ENCODE measurements at regions of chr3 and their contacts with region 1.

Region 1: DNA sequence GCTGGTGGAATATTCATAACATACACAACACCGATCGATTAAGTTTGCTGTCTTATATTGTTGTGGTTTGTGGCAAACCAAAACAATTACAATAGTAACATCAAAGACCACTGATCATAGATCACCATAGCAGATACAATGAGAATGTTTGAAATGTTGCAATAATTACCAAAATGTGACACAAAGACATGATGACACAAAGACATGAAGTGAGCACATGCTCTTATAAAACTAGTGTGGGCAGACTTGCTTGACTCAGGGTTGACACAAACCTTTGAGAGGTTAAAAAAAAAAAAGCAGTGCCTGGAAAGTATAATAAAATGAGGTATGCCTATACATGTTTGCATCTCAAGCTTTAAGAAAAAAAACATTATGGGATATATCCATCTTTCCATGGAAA is 130.3 kb downstream of the NR1I2 start:
- DNase-seq: no peak
- ATAC-seq: peak; percentile 79
- H3K4me3 Mint-ChIP-seq: peak overlapping the region; percentile 44
- H3K27ac Mint-ChIP-seq: peak overlapping the region; percentile 90
- H3K4me1 Mint-ChIP-seq: peaks cover 27% of the 10 kb centered on the region
- H3K27me3 Mint-ChIP-seq: no peaks in the 10 kb centered on the region

Region 2: DNA sequence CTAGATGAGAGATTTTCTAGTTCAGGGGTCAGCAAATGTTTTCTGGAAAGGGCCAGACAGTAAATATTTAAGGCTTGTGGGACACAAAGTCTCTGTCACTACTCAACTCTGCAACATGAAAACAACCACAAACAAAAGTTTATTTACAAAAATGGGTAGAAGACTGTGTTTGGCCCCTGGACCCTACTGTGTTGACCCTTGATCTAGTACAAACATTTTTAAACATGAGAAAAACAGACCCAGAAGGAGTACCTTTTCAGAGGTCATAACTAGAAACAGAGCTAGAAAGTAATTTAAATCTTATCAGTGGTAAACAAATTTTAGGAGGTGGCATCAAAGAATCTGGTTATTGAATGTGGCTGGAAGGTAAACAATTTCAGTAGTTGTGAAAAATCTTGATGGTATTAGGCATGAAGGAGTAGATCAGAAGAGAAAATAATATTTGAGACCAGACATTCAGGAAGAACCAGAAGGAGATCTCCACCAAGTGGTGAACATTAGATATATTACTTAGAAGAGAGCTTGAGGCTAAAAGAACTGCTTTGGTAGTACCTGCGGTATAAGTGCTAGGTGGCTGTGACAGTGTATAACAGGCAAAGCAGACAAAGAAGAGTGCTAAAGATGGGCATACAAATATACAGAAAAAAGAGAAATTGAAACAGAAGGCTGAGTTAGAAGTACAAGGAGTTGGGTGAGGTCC is 28.6 kb before region 1 on chr3:
- CTCF ChIA-PET with region 1: no interaction called
- POLR2A ChIA-PET with region 1: no interaction called
- intact Hi-C with region 1: no loop called
- DNase-seq: no peak
- ATAC-seq: no peak
- H3K4me3 Mint-ChIP-seq: no peak overlapping the region
- H3K27ac Mint-ChIP-seq: no peak overlapping the region
- H3K4me1 Mint-ChIP-seq: no peaks in the 10 kb centered on the region
- H3K27me3 Mint-ChIP-seq: no peaks in the 10 kb centered on the region

Region 3: GRCh38 chr3:119937229-119937628 is 25.0 kb after region 1 on chr3:
- CTCF ChIA-PET with region 1: interaction called, 3 read pairs
- POLR2A ChIA-PET with region 1: interaction called, 3 read pairs
- intact Hi-C with region 1: loop called (anchors 1 kb)
- DNase-seq: peak; percentile 73
- ATAC-seq: peak; percentile 98
- H3K4me3 Mint-ChIP-seq: peak overlapping the region; percentile 24
- H3K27ac Mint-ChIP-seq: peak overlapping the region; percentile 84
- H3K4me1 Mint-ChIP-seq: peaks cover 37% of the 10 kb centered on the region
- H3K27me3 Mint-ChIP-seq: no peaks in the 10 kb centered on the region

Region 4: GRCh38 chr3:120081719-120082118 is 169.5 kb after region 1 on chr3:
- CTCF ChIA-PET with region 1: no interaction called
- POLR2A ChIA-PET with region 1: no interaction called
- intact Hi-C with region 1: no loop called
- DNase-seq: no peak
- ATAC-seq: no peak
- H3K4me3 Mint-ChIP-seq: no peak overlapping the region
- H3K27ac Mint-ChIP-seq: no peak overlapping the region
- H3K4me1 Mint-ChIP-seq: peaks cover 61% of the 10 kb centered on the region
- H3K27me3 Mint-ChIP-seq: no peaks in the 10 kb centered on the region

Region 5: GRCh38 chr3:121152573-121152972 is 1240.4 kb after region 1 on chr3:
- CTCF ChIA-PET with region 1: no interaction called
- POLR2A ChIA-PET with region 1: no interaction called
- intact Hi-C with region 1: no loop called
- DNase-seq: no peak
- ATAC-seq: no peak
- H3K4me3 Mint-ChIP-seq: no peak overlapping the region
- H3K27ac Mint-ChIP-seq: no peak overlapping the region
- H3K4me1 Mint-ChIP-seq: no peaks in the 10 kb centered on the region
- H3K27me3 Mint-ChIP-seq: no peaks in the 10 kb centered on the region

Measured in activated CD4-positive, alpha-beta T cell treated with anti-CD3 and anti-CD28 coated beads for 36 hours (primary cell).